ENCODE measurements at regions of chr20 and their contacts with region 1.

Region 1: DNA sequence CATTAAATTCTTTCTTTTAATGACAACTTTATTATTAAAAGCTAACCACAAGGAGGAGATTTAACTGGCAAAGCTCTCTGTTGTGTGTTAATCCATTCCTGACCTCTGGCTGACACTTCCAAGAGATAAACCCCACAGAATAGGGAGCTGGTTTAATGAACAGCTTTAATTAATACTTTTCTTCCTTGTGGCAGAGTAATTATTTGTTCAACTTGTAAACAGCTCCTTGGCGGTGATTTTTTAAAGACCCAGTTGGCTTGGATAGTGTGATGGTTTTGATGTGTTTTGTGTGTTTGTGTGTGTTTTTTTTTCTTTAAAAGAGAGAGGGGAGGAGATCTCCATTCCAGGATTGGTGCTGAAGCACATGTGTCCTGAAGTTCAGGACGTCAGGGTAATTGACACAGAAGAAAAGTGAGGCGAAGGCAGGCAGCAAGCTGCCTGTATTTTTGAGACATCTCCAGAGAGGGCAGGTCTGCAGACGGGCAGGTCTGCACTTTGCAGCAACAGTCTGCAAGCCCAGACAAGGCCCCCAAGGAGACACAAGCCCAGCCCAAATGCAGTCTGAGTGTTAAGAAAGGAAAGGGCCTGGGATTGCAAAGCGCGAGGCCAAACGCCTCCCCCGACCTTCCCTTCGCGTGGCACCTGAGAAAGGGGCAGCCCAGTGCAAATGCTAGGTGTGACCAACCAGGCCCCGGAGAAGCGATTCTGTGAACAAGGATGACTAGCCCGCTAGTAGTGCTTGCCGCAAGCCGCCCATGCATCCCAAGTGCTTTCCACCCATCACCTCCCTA is 230.7 kb downstream of the ZMYND8 start:
- DNase-seq: no peak

Region 2: GRCh38 chr20:46757754-46758678 is 367.8 kb before region 1 on chr20:
- in situ Hi-C with region 1: loop called (anchors 25 kb)
- DNase-seq: peak; percentile 21

Region 3: DNA sequence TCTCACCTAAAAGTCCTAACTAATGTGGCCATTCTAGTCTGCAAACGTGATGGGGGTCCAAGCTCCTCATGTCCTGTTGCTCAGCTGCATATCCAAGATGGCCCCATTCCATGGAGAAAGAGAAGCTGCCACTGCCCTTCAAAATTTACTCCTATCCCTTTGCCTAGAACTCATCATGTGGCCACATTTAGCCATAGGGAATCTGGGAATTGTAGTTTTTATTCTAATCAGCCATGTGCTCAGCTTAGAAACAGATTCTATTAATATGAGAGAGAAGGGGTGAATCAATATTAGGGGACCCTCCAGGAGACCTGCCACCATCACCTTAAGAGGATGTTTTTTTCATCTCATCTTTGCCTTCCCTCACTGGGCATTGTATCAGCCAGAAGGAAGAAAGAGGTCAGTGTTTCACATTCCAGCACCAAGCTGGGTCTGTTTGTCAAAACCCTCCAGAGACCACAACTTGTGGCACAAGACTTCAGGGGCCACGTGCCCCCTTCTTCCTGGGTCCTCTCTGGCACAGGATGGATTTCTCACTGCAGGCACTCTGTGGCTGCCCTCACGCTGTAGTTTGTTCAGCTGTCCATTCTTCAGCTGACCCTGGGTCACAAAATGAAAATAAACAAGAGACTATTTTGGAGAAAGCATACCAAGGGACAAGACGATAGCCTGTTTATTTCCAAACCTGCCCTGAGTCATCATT is 59.1 kb before region 1 on chr20:
- in situ Hi-C with region 1: loop called (anchors 5 kb)
- DNase-seq: no peak

Measured in G401 (cell line).